ENCODE measurements at regions of chr12 and their contacts with region 1.

Region 1: GRCh38 chr12:95583933-95584332 is 32.7 kb upstream of the USP44 start:
- DNase-seq: no peak
- ATAC-seq: peak in 1 of 4 donors; percentile 22
- H3K4me3 ChIP-seq: no peak overlapping the region
- H3K27ac ChIP-seq: no peak overlapping the region
- H3K4me1 ChIP-seq: no peaks in the 10 kb centered on the region
- H3K27me3 ChIP-seq: no peaks in the 10 kb centered on the region
- CTCF ChIP-seq: no peak

Region 2: DNA sequence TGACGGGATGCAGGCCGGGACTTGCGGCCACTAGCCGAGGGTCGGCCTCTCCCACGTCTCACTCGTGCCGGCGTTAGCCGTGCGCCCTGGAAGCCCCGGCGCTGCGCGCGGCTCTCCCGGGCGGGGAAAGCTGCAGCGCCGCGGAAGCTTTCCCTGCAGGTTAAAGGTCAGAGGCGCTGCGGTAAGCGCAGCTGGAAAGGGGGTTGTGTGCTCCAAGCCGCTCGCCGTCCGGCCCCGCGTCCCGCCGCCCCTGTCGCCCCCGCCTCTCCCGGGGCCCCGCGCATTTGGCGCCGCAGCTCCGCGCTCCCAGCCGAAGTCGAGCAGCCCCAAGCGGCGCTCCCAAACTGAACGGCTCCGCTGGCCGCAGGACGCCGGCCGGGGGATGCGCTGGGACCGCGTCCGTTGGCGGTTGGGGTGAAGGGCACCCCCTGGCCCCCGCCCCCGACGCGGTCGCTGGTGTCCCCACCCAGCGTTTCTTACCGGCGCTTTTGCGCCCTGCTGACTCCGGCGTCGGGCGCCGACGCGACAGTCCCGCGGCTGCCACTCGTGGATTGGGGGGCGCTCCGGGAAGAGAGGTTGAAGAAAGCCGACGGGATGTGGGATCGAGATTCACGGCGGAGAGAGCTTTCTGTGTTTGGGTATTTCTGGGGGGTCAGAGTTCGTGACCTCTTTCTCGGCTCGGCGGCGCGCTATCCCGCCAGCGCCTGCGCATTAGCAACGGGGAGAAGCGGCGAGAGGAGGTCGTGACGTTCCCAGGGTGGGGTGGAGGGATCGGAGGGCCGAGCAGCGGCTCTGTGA is 510.8 kb before region 1 on chr12 and contains the start of gene NR2C1:
- intact Hi-C with region 1: no loop called
- DNase-seq: peak; percentile 89 to 98 (median 94)
- ATAC-seq: peak; percentile 97 to 99 (median 98)
- H3K4me3 ChIP-seq: peak within 1 kb of the TSS; percentile 78 to 99 (median 96)
- H3K27ac ChIP-seq: peak within 1 kb of the TSS; percentile 61 to 86 (median 68)
- H3K4me1 ChIP-seq: peaks cover 0 to 3% (median 0%) of the 10 kb centered on the region in 3 donors
- H3K27me3 ChIP-seq: no peaks in the 10 kb centered on the region
- CTCF ChIP-seq: no peak
- total RNA-seq, gene NR2C1: 8.5 to 17.6 (median 13.7) TPM

Region 3: GRCh38 chr12:95683418-95683817 is 99.5 kb after region 1 on chr12:
- intact Hi-C with region 1: no loop called
- DNase-seq: no peak
- ATAC-seq: no peak
- H3K4me3 ChIP-seq: no peak overlapping the region
- H3K27ac ChIP-seq: no peak overlapping the region
- H3K4me1 ChIP-seq: no peaks in the 10 kb centered on the region
- H3K27me3 ChIP-seq: no peaks in the 10 kb centered on the region
- CTCF ChIP-seq: no peak

Region 4: GRCh38 chr12:95815635-95816212 is 231.8 kb after region 1 on chr12:
- intact Hi-C with region 1: loop called in 2 of 3 experiments (anchors 2 to 5 kb)
- DNase-seq: no peak
- ATAC-seq: peak; percentile 68 to 88 (median 82)
- H3K4me3 ChIP-seq: no peak overlapping the region
- H3K27ac ChIP-seq: no peak overlapping the region
- H3K4me1 ChIP-seq: peaks cover 0 to 7% (median 6%) of the 10 kb centered on the region in 3 donors
- H3K27me3 ChIP-seq: no peaks in the 10 kb centered on the region
- CTCF ChIP-seq: peak in 2 of 4 donors; percentile 64 to 66

Measured in pancreas (tissue), 10 donors.